Caco-2 (cell line): ENCODE measurements at regions of chr7 and their contacts with region 1.

Region 1: GRCh38 chr7:45259966-45260646 is 102.5 kb downstream of the RAMP3 start:
- DNase-seq: peak in 1 of 2 experiments; percentile 76
- H3K4me3 ChIP-seq: no peak overlapping the region
- H3K4me3 Mint-ChIP-seq: no peak overlapping the region
- H3K27ac Mint-ChIP-seq: no peak overlapping the region
- H3K4me1 ChIP-seq: no peaks in the 10 kb centered on the region
- H3K4me1 Mint-ChIP-seq: no peaks in the 10 kb centered on the region
- H3K27me3 ChIP-seq: peaks cover 2% of the 10 kb centered on the region
- H3K27me3 Mint-ChIP-seq: peaks cover 11% of the 10 kb centered on the region
- CTCF ChIP-seq: peak; percentile 92 to 98

Region 2: DNA sequence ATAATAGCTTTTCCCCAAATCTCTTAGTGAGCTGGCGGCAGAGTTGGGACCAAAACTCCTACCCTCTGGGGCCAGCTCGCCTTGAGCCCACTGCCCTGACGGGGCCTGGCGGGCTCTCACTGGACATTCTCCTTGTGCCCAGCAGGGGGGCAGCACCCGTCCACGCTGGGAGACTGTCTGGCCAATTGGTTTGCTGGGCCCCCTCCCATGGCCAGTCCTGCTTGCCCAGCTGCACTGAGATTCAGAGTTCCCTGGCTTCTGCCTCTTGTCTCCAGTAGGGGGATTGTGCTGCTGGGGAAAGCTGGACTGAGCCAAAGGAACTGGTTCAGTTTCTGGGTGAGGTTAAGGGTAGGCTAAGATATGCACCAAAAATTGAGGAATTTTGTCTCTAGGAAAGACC is 42.7 kb before region 1 on chr7:
- CTCF ChIA-PET with region 1: interaction called, 4 read pairs
- POLR2A ChIA-PET with region 1: no interaction called
- intact Hi-C with region 1: loop called (anchors 2 kb)
- DNase-seq: peak; percentile 47 to 58
- H3K4me3 ChIP-seq: no peak overlapping the region
- H3K4me3 Mint-ChIP-seq: no peak overlapping the region
- H3K27ac Mint-ChIP-seq: no peak overlapping the region
- H3K4me1 ChIP-seq: no peaks in the 10 kb centered on the region
- H3K4me1 Mint-ChIP-seq: no peaks in the 10 kb centered on the region
- H3K27me3 ChIP-seq: peaks cover 1% of the 10 kb centered on the region; the same call in 1 of the 2 replicates
- H3K27me3 Mint-ChIP-seq: peaks cover 33% of the 10 kb centered on the region
- CTCF ChIP-seq: peak; percentile 58 to 83

Region 3: DNA sequence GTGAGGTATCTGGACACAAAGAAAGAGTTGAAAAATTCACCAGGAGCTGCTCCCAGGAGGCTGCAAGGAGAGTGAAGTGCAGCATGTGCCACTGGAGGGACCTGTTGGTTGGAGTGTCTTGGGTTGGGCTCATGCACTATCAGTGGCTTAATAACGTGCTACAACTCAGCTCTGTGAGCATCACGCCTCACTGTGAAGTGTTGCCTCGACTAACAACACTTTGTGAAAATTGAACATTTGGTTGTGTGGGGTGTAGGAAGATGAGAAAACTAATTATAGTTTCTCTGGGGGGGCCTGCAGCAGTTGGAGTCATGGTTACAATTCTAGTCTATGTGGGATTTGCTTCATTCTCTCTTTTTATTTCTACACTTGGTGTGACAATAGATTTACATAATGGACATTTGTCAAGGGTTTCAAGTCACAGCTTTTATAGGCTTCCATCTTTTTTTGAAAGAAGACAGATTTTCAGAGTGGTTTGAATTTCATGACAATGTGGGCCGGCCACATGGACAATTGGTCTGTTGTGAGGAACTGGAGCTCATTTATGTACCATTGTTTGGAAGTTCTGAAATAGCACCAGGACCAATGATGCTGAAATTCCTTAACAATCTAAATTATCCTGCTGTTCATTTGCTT is 18.8 kb after region 1 on chr7:
- CTCF ChIA-PET with region 1: no interaction called
- POLR2A ChIA-PET with region 1: no interaction called
- intact Hi-C with region 1: no loop called
- DNase-seq: no peak
- H3K4me3 ChIP-seq: no peak overlapping the region
- H3K4me3 Mint-ChIP-seq: no peak overlapping the region
- H3K27ac Mint-ChIP-seq: no peak overlapping the region
- H3K4me1 ChIP-seq: no peaks in the 10 kb centered on the region
- H3K4me1 Mint-ChIP-seq: no peaks in the 10 kb centered on the region
- H3K27me3 ChIP-seq: no peaks in the 10 kb centered on the region
- H3K27me3 Mint-ChIP-seq: peaks cover 23% of the 10 kb centered on the region
- CTCF ChIP-seq: no peak

Region 4: GRCh38 chr7:45414176-45414575 is 154.1 kb after region 1 on chr7:
- CTCF ChIA-PET with region 1: no interaction called
- POLR2A ChIA-PET with region 1: no interaction called
- intact Hi-C with region 1: no loop called
- DNase-seq: no peak
- H3K4me3 ChIP-seq: no peak overlapping the region
- H3K4me3 Mint-ChIP-seq: no peak overlapping the region
- H3K27ac Mint-ChIP-seq: no peak overlapping the region
- H3K4me1 ChIP-seq: no peaks in the 10 kb centered on the region
- H3K4me1 Mint-ChIP-seq: no peaks in the 10 kb centered on the region
- H3K27me3 ChIP-seq: no peaks in the 10 kb centered on the region
- H3K27me3 Mint-ChIP-seq: peaks cover 3% of the 10 kb centered on the region
- CTCF ChIP-seq: no peak

Region 5: DNA sequence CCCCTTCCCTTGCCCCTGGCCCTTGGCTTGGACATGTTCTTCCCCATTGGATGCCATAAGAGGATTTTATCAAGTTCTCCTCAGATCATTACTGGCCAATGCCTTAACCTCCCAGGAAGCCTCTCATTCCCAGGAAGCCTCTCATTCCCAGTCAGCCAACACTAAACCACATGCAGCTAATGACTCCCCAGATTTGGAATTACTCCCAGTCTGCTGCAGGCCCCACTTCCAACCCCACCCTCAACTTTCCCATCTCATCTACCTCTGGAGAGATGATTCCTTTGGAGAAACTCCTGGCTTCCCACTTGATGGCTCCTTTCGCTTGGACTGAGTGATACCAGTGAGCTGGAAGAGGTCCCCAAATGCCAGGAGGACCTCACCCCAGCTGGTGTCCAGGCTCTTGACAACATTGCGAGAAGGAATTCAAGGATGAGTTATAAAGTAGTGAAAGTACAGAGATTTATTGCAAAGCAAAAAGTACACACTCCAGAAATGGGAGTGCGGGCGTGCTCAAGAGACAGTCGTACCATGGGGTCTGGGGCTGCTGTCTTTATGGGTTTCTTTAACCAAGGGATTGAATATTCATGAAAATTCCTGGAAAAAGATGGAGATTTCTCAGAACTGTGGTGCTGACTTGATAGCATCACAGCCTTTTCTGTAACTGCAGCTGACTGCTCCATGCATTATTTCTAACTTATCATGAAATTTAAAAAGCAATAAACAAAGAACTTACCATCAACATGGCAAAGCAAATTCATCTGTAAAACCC is 196.8 kb after region 1 on chr7:
- CTCF ChIA-PET with region 1: no interaction called
- POLR2A ChIA-PET with region 1: no interaction called
- intact Hi-C with region 1: no loop called
- DNase-seq: no peak
- H3K4me3 ChIP-seq: no peak overlapping the region
- H3K4me3 Mint-ChIP-seq: no peak overlapping the region
- H3K27ac Mint-ChIP-seq: no peak overlapping the region
- H3K4me1 ChIP-seq: peaks cover 8% of the 10 kb centered on the region; the same call in 1 of the 2 replicates
- H3K4me1 Mint-ChIP-seq: no peaks in the 10 kb centered on the region
- H3K27me3 ChIP-seq: no peaks in the 10 kb centered on the region
- H3K27me3 Mint-ChIP-seq: peaks cover 3% of the 10 kb centered on the region
- CTCF ChIP-seq: no peak

Region 6: DNA sequence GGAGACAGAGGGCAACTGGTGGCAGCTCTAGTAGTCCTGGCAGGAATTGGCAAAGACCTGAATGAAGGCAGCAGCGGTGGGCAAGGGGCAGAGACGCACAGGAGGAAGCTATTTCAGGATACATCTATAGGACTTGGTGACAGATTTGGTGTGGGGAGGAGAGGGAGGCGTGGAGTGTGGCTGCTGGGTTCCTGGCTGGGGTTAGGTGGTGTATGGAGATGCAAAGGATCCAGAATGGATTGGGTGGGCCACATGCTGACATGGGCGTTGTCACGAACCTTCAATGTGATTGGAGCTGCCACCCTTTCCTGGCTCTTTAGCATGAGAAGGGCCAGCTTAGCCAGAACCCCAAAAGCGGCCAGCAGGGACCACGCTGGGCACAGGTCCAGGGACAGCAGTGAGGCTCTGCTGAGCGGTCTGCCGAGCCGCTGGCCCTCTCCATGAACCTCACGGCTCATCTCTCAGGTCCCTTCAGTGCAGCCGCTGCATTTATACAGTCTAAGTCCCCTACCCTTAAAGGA is 303.9 kb after region 1 on chr7:
- CTCF ChIA-PET with region 1: no interaction called
- POLR2A ChIA-PET with region 1: no interaction called
- intact Hi-C with region 1: no loop called
- DNase-seq: no peak
- H3K4me3 ChIP-seq: no peak overlapping the region
- H3K4me3 Mint-ChIP-seq: no peak overlapping the region
- H3K27ac Mint-ChIP-seq: no peak overlapping the region
- H3K4me1 ChIP-seq: no peaks in the 10 kb centered on the region
- H3K4me1 Mint-ChIP-seq: no peaks in the 10 kb centered on the region
- H3K27me3 ChIP-seq: no peaks in the 10 kb centered on the region
- H3K27me3 Mint-ChIP-seq: peaks cover 39% of the 10 kb centered on the region
- CTCF ChIP-seq: no peak